ENCODE measurements at regions of chr10 and their contacts with region 1.

Region 1: GRCh38 chr10:34637418-34637911 is 177.6 kb downstream of the PARD3 start:
- DNase-seq: peak; percentile 86

Region 2: DNA sequence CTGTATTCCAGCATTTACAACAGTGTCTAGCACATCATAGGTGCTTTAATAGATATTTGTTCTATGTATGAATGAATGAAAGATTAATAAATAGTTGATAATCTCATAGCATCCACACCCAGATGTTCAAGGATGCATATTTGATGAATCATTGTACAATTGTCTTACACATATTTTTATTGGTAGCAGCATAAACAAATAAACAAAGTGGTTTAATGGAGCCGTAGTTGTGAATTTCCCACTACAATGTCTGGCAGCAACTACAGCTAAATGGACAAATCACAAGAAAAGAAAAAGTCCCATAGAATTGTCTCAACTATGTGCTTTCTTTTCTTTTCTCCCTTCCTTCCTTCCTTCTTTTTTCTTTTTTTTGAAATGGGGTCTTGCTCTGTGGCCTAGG is 1453.8 kb before region 1 on chr10:
- intact Hi-C with region 1: loop called in 1 of 2 experiments (anchors 2 kb)
- DNase-seq: no peak

Region 3: GRCh38 chr10:33196710-33197491 is 1440.6 kb before region 1 on chr10:
- intact Hi-C with region 1: loop called in 1 of 2 experiments (anchors 5 kb)
- DNase-seq: no peak

Region 4: DNA sequence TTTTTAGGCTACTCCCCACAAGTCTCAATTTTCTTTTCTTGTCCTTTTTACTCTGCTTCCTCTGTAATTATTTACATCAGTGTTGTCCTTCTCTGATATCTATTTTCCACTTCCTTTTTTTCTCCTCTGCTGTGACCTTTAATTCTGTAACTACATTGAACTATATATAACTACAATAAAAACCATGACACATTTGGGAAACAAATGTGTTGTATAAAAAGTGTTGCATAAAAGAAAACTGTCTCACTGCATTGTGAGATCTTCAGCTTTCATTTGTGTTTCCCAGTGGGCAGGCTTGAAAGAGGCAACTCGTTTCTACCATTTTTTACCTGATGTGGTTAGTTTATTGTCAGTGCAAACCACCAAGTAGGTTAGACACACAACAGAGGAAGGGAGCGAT is 819.1 kb before region 1 on chr10:
- intact Hi-C with region 1: no loop called
- DNase-seq: no peak

Region 5: GRCh38 chr10:34655286-34656170 is 18.1 kb after region 1 on chr10:
- intact Hi-C with region 1: no loop called
- DNase-seq: no peak

Measured in posterior vena cava (tissue), 2 donors.